Tibial artery (tissue), 4 donors: ENCODE measurements at regions of chr12 and their contacts with region 1.

Region 1: DNA sequence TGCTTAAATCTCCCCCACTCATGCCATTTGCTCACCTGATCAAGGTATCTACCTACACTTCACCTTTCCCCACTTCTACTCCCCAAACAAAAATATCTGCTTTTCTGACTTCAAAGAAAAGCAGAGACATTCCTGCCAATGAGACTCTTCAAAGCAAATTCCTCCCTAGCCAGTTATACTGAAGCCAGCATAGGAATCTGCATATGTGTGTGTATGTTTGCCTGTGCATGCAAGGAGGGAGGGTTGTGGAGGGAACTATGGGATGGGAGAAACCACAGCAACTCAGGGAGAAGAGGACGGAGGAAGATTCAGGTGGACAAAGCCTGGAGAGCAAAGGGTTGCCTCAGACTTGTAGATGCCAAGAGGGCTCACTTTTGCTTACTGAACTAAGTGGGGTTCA is 26.4 kb upstream of the VDR start:
- DNase-seq: no peak
- H3K4me3 ChIP-seq: no peak overlapping the region
- H3K27ac ChIP-seq: no peak overlapping the region
- H3K4me1 ChIP-seq: peaks cover 0 to 4% (median 0%) of the 10 kb centered on the region in 4 donors
- H3K27me3 ChIP-seq: peaks cover 0 to 8% of the 10 kb centered on the region in 2 donors
- CTCF ChIP-seq: no peak

Region 2: DNA sequence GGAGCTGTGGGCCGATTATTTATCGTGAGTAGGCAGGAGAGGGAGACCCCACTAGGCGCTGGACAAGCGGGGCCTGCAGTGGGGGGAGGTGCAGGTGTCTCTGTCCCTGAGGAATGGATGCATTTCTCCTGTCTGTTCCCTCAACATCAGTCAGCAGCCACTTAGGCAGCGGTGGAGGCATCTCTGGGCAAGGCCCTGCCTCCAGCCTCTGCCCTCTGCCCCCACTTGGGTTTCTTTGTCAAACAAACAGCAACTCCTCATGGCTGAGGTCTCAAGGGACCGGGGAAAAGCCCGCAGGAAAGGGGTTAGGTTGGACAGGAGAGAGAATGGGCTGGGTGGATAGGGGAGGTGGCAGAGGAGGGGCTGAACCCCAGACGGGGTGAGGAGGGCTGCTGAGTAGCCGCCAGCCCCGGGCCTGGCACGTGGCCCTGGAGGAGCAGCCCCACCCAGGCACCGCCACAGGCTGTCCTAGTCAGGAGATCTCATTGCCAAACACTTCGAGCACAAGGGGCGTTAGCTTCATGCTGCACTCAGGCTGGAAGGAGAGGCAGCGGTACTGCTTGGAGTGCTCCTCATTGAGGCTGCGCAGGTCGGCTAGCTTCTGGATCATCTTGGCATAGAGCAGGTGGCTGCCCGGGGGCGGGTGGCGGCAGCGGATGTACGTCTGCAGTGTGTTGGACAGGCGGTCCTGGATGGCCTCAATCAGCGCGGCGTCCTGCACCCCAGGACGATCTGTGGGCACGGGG is 86.7 kb before region 1 on chr12:
- intact Hi-C with region 1: no loop called
- DNase-seq: peak; percentile 59 to 74
- H3K4me3 ChIP-seq: no peak overlapping the region
- H3K27ac ChIP-seq: no peak overlapping the region
- H3K4me1 ChIP-seq: no peaks in the 10 kb centered on the region
- H3K27me3 ChIP-seq: peaks cover 0 to 14% of the 10 kb centered on the region in 2 donors
- CTCF ChIP-seq: no peak

Region 3: DNA sequence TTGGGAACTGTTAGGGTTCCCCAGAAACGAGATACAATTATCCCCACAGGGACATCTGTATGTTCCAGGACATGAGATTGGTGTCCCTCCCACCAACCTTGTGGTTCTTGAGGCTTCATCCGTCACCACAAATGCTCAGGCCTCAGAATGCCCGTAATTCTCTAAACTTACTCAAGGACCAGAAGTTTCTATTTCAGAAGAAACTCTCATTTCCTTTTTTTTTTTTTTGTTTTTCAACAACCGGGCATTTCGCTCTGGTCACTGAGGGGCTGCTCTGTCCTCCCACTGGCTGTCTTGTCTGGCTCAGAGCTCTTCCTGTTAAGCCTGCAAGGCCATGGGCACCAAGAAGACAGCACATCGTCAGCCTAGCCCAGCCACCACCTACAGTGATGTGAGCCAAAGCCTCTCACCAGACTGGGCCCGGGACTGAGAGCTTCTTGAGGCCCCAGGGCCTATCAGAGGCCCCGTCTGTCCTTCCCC is 62.6 kb before region 1 on chr12:
- intact Hi-C with region 1: loop called (anchors 5 kb)
- DNase-seq: peak in 1 of 2 donors; percentile 17
- H3K4me3 ChIP-seq: no peak overlapping the region
- H3K27ac ChIP-seq: no peak overlapping the region
- H3K4me1 ChIP-seq: peaks cover 0 to 25% (median 20%) of the 10 kb centered on the region in 4 donors
- H3K27me3 ChIP-seq: no peaks in the 10 kb centered on the region
- CTCF ChIP-seq: no peak

Region 4: DNA sequence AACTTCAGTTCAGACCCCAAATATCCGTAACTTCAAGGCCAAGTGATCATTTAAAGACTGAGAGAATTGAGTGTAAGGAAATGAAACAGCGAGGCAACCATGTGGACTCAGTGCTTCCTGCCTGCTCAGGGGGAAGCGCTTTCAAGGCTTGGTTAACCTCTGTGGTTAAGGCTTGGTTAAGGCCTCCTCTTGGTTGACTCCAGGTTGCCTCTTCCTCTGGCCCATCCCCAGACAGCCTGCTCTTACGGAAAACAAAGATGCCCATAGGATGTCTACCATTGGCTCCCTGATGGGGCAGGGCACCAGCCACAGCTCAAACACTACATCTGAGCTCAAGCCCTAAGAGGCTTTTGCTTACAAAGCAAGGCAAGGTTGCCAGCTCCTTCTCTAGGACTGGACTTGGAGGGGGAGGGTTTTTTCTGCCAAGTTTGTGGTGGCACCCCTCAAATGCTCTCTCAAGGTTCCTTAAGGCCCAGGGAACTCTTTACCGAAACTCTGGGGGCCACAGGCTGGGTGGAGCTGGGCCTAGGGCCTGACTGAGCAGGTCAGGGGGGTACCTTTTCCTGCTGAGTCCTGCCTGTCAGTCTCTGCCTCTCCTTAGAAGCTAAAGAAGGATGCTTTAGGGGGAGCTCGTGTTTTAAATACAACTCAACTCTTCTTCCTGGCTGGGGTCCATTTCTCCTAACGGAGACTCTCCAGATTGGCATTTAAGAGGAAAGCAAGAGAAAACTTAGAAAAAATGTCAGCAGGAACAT is 59.4 kb after region 1 on chr12:
- intact Hi-C with region 1: no loop called
- DNase-seq: peak in 1 of 2 donors; percentile 34
- H3K4me3 ChIP-seq: no peak overlapping the region
- H3K27ac ChIP-seq: no peak overlapping the region
- H3K4me1 ChIP-seq: no peaks in the 10 kb centered on the region
- H3K27me3 ChIP-seq: peaks cover 0 to 4% of the 10 kb centered on the region in 2 donors
- CTCF ChIP-seq: no peak